H1 (cell line): ENCODE measurements at regions of chr12 and their contacts with region 1.

Region 1: GRCh38 chr12:3299929-3300832 is 190.8 kb upstream of the PRMT8 start:
- DNase-seq: peak; percentile 85 to 93
- H3K4me3 ChIP-seq: peak overlapping the region in 3 of 4 experiments; percentile 7 to 42 (median 11); a peak in 3 of 8 replicates
- H3K27ac ChIP-seq: no peak overlapping the region
- H3K4me1 ChIP-seq: peaks cover 0 to 13% (median 4%) of the 10 kb centered on the region in 4 experiments; a peak in 5 of 7 replicates
- H3K27me3 ChIP-seq: peaks cover 0 to 4% (median 2%) of the 10 kb centered on the region in 4 experiments; a peak in 2 of 7 replicates
- CTCF ChIP-seq: peak in 2 of 3 experiments; percentile 97 to 98; a peak in 3 of 4 replicates
- EP300 ChIP-seq: peak in 1 of 2 experiments; percentile 33; a peak in 1 of 3 replicates
- POLR2A ChIP-seq: no peak
- RAD21 ChIP-seq: peak; percentile 93 to 98

Region 2: DNA sequence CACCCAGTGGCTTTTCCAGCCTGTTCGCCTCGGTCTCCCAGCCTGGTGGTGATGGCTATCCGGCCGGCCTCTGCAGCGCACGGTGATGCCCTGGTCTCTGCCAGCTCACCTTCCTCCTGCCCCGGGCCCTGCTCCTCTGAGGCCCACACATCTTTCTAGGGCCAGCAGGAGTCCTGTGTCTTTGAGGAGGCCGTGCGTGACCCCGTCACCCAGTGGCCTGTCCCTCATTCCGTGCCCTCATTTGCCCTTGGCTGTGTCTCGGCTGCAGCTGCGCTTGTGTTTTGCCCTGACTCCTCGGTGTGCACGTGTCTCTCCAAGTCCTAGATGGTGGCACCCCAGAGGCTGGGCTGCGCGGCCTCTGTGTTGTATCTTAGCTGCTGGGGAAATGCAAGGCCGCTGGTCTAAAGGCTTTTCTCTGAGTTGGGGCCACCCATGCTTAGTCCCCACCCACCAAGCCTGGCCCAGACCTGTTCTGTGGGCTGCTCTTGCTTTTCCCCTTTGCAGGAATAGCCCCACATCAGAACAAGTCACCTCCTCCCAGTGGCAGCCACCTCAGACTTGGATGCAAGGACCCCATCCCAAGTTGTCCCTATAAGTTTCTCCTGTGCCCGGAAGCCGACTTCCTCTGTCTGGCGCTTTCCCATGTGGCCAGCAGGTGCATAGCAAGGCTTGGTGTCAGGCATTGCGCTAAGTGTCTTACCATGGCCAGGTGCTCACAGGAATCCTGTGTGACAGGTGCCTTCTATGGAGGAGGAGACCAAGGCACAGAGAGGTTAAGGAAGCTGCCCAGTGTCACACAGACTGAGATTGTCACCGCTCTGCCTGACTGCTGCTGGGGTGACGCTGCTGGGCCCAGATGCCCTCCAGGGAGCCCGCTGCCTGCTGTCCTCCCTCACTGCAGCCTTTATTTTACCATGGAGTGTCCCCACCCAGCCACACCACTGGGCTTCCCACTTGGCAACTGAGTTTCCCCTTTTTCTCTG is 158.6 kb before region 1 on chr12:
- CTCF ChIA-PET with region 1: interaction called, 13 read pairs
- POLR2A ChIA-PET with region 1: no interaction called
- DNase-seq: peak in 1 of 2 experiments; percentile 44
- H3K4me3 ChIP-seq: no peak overlapping the region
- H3K27ac ChIP-seq: no peak overlapping the region
- H3K4me1 ChIP-seq: peaks cover 2 to 27% (median 19%) of the 10 kb centered on the region in 4 experiments
- H3K27me3 ChIP-seq: no peaks in the 10 kb centered on the region
- CTCF ChIP-seq: peak in 1 of 3 experiments; percentile 54; a peak in 2 of 4 replicates
- EP300 ChIP-seq: no peak
- POLR2A ChIP-seq: no peak
- RAD21 ChIP-seq: peak; percentile 19 to 40; a peak in 2 of 4 replicates

Region 3: DNA sequence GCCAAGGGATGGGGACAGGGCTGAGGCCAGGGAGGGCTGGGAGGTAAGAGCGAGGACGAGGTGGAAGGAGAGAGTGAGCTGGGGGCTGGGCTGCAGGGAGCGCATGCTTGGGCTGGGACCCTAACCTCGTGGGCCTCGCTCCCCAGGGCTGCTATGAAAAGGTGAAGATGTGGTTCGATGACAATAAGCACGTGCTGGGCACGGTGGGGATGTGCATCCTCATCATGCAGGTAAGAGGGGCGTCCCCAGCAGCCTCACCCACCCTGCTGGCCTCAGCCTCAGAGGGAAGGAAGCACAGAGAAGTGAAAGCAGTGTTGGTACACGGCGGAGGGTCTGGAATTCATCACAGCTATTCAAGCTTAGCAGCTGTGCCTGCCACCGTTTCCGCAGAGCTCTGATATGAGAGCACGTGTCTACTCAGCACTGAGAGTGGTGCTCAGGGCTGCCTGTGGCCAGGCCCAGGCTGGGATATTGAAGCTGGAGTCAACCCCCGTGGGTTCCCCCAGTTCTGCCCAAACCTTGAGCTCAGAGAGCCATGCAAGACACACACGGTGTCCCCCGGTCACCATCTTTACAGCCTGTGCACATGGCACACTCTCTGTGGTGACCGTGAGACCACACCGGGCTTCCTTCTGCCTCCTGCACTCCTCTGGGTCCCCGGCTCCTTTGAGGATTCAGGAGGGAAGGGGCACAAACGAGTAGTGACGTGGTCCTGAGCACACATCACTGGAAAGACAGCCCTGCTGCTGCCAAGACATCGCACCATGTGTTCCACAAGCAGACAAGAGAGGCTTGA is 18.4 kb before region 1 on chr12:
- CTCF ChIA-PET with region 1: interaction called, 66 read pairs
- POLR2A ChIA-PET with region 1: no interaction called
- DNase-seq: no peak
- H3K4me3 ChIP-seq: no peak overlapping the region
- H3K27ac ChIP-seq: no peak overlapping the region
- H3K4me1 ChIP-seq: peaks cover 0 to 15% (median 11%) of the 10 kb centered on the region in 4 experiments; a peak in 5 of 7 replicates
- H3K27me3 ChIP-seq: no peaks in the 10 kb centered on the region
- CTCF ChIP-seq: no peak
- EP300 ChIP-seq: no peak
- POLR2A ChIP-seq: no peak
- RAD21 ChIP-seq: no peak

Region 4: GRCh38 chr12:3342056-3342455 is 41.9 kb after region 1 on chr12:
- CTCF ChIA-PET with region 1: interaction called, 41 read pairs
- POLR2A ChIA-PET with region 1: no interaction called
- DNase-seq: peak in 1 of 2 experiments; percentile 21
- H3K4me3 ChIP-seq: no peak overlapping the region
- H3K27ac ChIP-seq: no peak overlapping the region
- H3K4me1 ChIP-seq: peaks cover 0 to 11% (median 3%) of the 10 kb centered on the region in 4 experiments; a peak in 4 of 7 replicates
- H3K27me3 ChIP-seq: peaks cover 0 to 3% (median 0%) of the 10 kb centered on the region in 4 experiments; a peak in 1 of 7 replicates
- CTCF ChIP-seq: peak; percentile 28 to 49 (median 49); a peak in 3 of 4 replicates
- EP300 ChIP-seq: no peak
- POLR2A ChIP-seq: no peak
- RAD21 ChIP-seq: peak; percentile 49 to 65

Region 5: GRCh38 chr12:3453990-3454675 is 154.0 kb after region 1 on chr12:
- CTCF ChIA-PET with region 1: interaction called, 203 read pairs
- POLR2A ChIA-PET with region 1: no interaction called
- DNase-seq: no peak
- H3K4me3 ChIP-seq: no peak overlapping the region
- H3K27ac ChIP-seq: no peak overlapping the region
- H3K4me1 ChIP-seq: peaks cover 0 to 11% (median 4%) of the 10 kb centered on the region in 4 experiments; a peak in 3 of 7 replicates
- H3K27me3 ChIP-seq: peaks cover 0 to 6% (median 4%) of the 10 kb centered on the region in 4 experiments; a peak in 4 of 7 replicates
- CTCF ChIP-seq: no peak
- EP300 ChIP-seq: no peak
- POLR2A ChIP-seq: no peak
- RAD21 ChIP-seq: no peak

Region 6: GRCh38 chr12:3542883-3543282 is 242.7 kb after region 1 on chr12:
- CTCF ChIA-PET with region 1: interaction called, 11 read pairs
- POLR2A ChIA-PET with region 1: no interaction called
- DNase-seq: peak in 1 of 2 experiments; percentile 14
- H3K4me3 ChIP-seq: no peak overlapping the region
- H3K27ac ChIP-seq: no peak overlapping the region
- H3K4me1 ChIP-seq: no peaks in the 10 kb centered on the region
- H3K27me3 ChIP-seq: no peaks in the 10 kb centered on the region
- CTCF ChIP-seq: no peak
- EP300 ChIP-seq: no peak
- POLR2A ChIP-seq: no peak
- RAD21 ChIP-seq: no peak

Region 7: GRCh38 chr12:3752741-3753486 is 452.7 kb after region 1 on chr12 and contains the start of gene CRACR2A:
- CTCF ChIA-PET with region 1: interaction called, 14 read pairs
- POLR2A ChIA-PET with region 1: no interaction called
- DNase-seq: peak; percentile 41 to 88
- H3K4me3 ChIP-seq: peak within 1 kb of the TSS; percentile 8 to 54 (median 23); a peak in 7 of 8 replicates
- H3K27ac ChIP-seq: no peak within 1 kb of the TSS
- H3K4me1 ChIP-seq: peaks cover 0 to 4% (median 3%) of the 10 kb centered on the region in 4 experiments; a peak in 5 of 7 replicates
- H3K27me3 ChIP-seq: peaks cover 0 to 16% (median 12%) of the 10 kb centered on the region in 4 experiments; a peak in 6 of 7 replicates
- CTCF ChIP-seq: peak; percentile 77 to 98 (median 77)
- EP300 ChIP-seq: 0 out of 3 replicates have a peak, but pooled peaks of 1 of the 2 experiments have one; percentile 6
- POLR2A ChIP-seq: no peak
- RAD21 ChIP-seq: peak; percentile 55 to 72
- total RNA-seq, gene CRACR2A: 3.0 and 3.2 TPM in 2 replicates